OCI-LY7 (cell line): ENCODE measurements at regions of chr4 and their contacts with region 1.

Region 1: GRCh38 chr4:67499799-67500198 is 45.5 kb downstream of the CENPC start:
- DNase-seq: no peak
- H3K4me3 ChIP-seq: no peak overlapping the region
- H3K27ac ChIP-seq: no peak overlapping the region
- H3K4me1 ChIP-seq: no peaks in the 10 kb centered on the region
- CTCF ChIP-seq: no peak

Region 2: DNA sequence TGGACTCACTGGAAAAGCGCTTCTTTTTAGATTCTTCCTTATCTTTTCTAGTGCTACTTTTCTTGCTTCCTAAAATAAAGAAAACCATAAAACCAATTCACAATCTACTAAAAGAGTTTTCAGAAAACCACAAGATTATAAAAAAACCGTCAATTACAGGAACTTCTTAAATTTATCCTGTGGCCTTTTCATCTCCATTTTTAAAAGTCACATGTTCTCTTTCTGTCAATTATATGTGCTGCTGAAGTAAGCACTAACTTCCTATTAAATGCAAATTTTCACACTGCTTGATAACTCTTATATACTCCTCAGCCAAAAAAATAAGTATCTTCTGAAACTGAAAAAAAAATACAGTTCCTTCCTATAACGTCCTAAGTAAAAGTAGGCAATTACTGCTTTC is 12.7 kb after region 1 on chr4:
- CTCF ChIA-PET with region 1: no interaction called
- POLR2A ChIA-PET with region 1: interaction called, 9 read pairs
- intact Hi-C with region 1: loop called (anchors 2 kb)
- DNase-seq: no peak
- H3K4me3 ChIP-seq: no peak overlapping the region
- H3K27ac ChIP-seq: no peak overlapping the region
- H3K4me1 ChIP-seq: peaks cover 7% of the 10 kb centered on the region
- CTCF ChIP-seq: no peak